ENCODE measurements at regions of chr1 and their contacts with region 1.

Region 1: GRCh38 chr1:93607814-93608186 is 73.8 kb downstream of the BCAR3 start:
- DNase-seq: no peak
- ATAC-seq: no peak
- H3K4me3 ChIP-seq: no peak overlapping the region
- H3K27ac ChIP-seq: peak overlapping the region; percentile 84 to 90 (median 87)
- H3K4me1 ChIP-seq: peaks cover 84 to 98% of the 10 kb centered on the region in 2 donors
- H3K27me3 ChIP-seq: no peaks in the 10 kb centered on the region
- CTCF ChIP-seq: no peak
- POLR2A ChIP-seq: no peak

Region 2: DNA sequence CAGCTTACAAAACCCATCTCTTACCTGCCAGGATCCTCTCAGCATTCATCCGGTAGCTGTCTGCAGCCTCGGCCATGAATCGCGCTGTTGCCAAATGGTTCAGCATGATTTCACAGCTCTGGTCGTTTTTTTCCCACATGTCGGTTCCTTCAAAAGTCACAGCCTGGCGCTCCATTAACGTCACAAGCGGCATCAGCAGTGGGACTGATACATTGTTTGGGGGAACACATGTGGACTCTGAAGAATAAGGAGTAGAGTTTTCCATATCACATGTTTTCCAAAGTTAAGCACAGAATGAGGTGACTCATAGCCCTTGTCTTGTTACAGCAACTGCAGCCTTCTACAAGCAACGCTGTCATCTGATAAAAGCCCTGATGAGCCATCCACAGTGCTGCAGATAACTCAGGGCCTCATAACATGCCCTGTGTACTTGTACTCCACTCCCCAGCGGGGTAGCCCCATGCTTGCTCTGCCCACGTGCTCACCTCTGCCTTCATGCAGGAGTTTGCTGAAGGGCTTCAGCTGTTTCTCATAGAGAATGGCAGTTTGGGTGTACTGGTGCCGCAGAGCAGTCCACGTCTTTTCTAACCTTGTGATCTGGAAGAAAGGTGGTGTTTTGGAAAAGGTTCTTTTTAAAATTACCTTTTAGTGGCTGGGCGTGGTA is 40.4 kb before region 1 on chr1:
- in situ Hi-C with region 1: no loop called
- intact Hi-C with region 1: loop called (anchors 5 kb)
- DNase-seq: peak; percentile 70 to 82
- ATAC-seq: peak; percentile 96 to 98
- H3K4me3 ChIP-seq: no peak overlapping the region
- H3K27ac ChIP-seq: peak overlapping the region; percentile 73 to 94 (median 87)
- H3K4me1 ChIP-seq: peaks cover 16 to 17% of the 10 kb centered on the region in 2 donors
- H3K27me3 ChIP-seq: no peaks in the 10 kb centered on the region
- CTCF ChIP-seq: peak in 1 of 5 experiments; percentile 16
- POLR2A ChIP-seq: peak; percentile 44 to 73